ENCODE measurements at regions of chr5 and their contacts with region 1.

Region 1: DNA sequence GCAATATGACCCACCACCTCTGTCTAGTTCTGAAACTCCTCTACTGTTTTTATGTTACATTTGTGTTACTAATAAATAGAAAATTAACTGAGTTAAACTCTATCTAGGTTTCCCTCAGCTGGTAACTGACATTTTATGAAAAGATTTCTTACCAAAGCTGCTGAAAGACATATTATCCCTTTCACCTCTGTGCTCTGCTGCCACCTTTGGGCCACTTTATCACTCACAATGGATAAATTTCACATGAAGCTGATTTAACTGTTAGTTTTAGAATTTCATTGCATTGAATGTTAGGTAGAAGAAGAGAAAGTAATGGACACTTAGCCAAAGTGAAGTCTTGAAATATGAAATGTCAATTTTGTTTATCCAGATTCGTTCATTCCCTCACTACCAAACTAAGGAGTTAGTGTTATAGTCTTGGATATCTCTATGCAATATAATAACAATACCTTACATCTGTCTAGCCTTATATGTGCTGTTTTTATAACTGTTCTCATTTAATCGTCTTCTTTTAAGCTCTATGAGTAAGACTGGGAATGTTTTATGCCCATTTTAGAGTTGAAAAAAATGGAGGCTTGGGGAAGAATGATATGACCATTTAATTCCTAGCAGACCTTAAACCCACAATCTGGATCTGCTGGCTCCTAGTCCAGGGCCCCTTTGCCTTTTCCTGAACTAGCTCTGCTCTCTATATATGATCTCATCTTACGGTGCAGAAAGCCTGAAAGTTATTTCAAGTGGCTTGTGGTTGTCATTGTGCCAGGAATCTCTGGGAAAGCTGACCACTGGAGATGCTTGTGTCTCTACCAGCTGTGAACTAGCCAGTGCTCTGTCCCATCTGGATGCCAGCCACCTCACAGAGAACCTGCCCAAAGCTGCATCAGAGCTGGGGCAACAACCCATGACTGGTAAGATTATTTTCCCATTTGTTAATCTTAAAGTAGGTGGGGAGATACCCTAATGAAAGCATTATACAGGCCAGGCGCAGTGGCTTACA is 97.1 kb downstream of the GOLPH3 start:
- DNase-seq: peak; percentile 34
- ATAC-seq: peak; percentile 70
- H3K4me3 ChIP-seq: no peak overlapping the region
- H3K27ac ChIP-seq: no peak overlapping the region
- H3K4me1 ChIP-seq: no peaks in the 10 kb centered on the region
- H3K27me3 ChIP-seq: no peaks in the 10 kb centered on the region
- CTCF ChIP-seq: peak; percentile 72 to 91 (median 77)
- POLR2A ChIP-seq: no peak
- RAD21 ChIP-seq: peak; percentile 88

Region 2: GRCh38 chr5:31581498-31582099 is 495.4 kb before region 1 on chr5:
- CTCF ChIA-PET with region 1: interaction called, 10 read pairs
- POLR2A ChIA-PET with region 1: no interaction called
- RAD21 ChIA-PET with region 1: no interaction called
- intact Hi-C with region 1: loop called (anchors 1 kb)
- DNase-seq: peak; percentile 22
- ATAC-seq: no peak
- H3K4me3 ChIP-seq: no peak overlapping the region
- H3K27ac ChIP-seq: no peak overlapping the region
- H3K4me1 ChIP-seq: no peaks in the 10 kb centered on the region
- H3K27me3 ChIP-seq: peaks cover 5% of the 10 kb centered on the region
- CTCF ChIP-seq: peak; percentile 31 to 62 (median 52); a peak in 5 of 6 replicates
- POLR2A ChIP-seq: no peak
- RAD21 ChIP-seq: peak; percentile 71

Region 3: GRCh38 chr5:31809050-31809870 is 267.7 kb before region 1 on chr5:
- CTCF ChIA-PET with region 1: interaction called, 13 read pairs
- POLR2A ChIA-PET with region 1: no interaction called
- RAD21 ChIA-PET with region 1: interaction called, 3 to 4 read pairs
- intact Hi-C with region 1: no loop called
- DNase-seq: peak; percentile 68
- ATAC-seq: peak; percentile 97
- H3K4me3 ChIP-seq: no peak overlapping the region
- H3K27ac ChIP-seq: no peak overlapping the region
- H3K4me1 ChIP-seq: peaks cover 0 to 14% of the 10 kb centered on the region in 2 experiments; a peak in 2 of 4 replicates
- H3K27me3 ChIP-seq: peaks cover 9% of the 10 kb centered on the region
- CTCF ChIP-seq: peak; percentile 80 to 96 (median 84)
- POLR2A ChIP-seq: no peak
- RAD21 ChIP-seq: peak; percentile 87

Region 4: GRCh38 chr5:31825518-31826068 is 251.4 kb before region 1 on chr5:
- CTCF ChIA-PET with region 1: interaction called, 51 read pairs
- POLR2A ChIA-PET with region 1: no interaction called
- RAD21 ChIA-PET with region 1: interaction called, 3 to 4 read pairs
- intact Hi-C with region 1: loop called (anchors 1 kb)
- DNase-seq: peak; percentile 61
- ATAC-seq: peak; percentile 93
- H3K4me3 ChIP-seq: no peak overlapping the region
- H3K27ac ChIP-seq: no peak overlapping the region
- H3K4me1 ChIP-seq: no peaks in the 10 kb centered on the region
- H3K27me3 ChIP-seq: no peaks in the 10 kb centered on the region
- CTCF ChIP-seq: peak; percentile 70 to 81 (median 73)
- POLR2A ChIP-seq: no peak
- RAD21 ChIP-seq: peak; percentile 87

Region 5: DNA sequence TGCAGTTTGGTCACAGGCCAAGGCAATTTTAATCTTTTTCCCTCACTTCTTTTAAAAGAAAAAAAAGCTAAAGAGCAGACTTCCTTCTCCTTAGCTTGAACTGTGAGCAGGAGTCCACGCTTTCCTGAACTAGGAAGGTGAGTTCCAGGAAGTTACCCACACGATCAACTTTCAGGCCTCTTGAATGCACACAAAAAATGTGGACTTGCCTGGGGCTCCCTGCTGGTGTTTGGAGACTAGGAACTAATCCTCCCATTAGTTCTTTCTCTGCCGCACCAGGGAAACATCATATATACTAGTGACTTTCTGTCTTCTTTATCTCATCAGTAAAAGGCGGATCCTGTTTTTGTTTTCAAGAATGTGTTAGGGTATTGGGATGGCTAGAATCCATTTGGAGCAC is 142.8 kb before region 1 on chr5:
- CTCF ChIA-PET with region 1: interaction called, 5 read pairs
- POLR2A ChIA-PET with region 1: no interaction called
- RAD21 ChIA-PET with region 1: interaction called in 1 of 2 experiments, 3 read pairs
- intact Hi-C with region 1: loop called (anchors 1 kb)
- DNase-seq: no peak
- ATAC-seq: no peak
- H3K4me3 ChIP-seq: no peak overlapping the region
- H3K27ac ChIP-seq: no peak overlapping the region
- H3K4me1 ChIP-seq: no peaks in the 10 kb centered on the region; a peak in 1 of 4 replicates
- H3K27me3 ChIP-seq: no peaks in the 10 kb centered on the region
- CTCF ChIP-seq: no peak
- POLR2A ChIP-seq: no peak
- RAD21 ChIP-seq: no peak